CD4-positive, alpha-beta T cell (primary cell): ENCODE measurements at regions of chr7 and their contacts with region 1.

Region 1: GRCh38 chr7:32495298-32496176 is at the start of gene AVL9:
- DNase-seq: peak; percentile 97 to 100 (median 99)
- ATAC-seq: peak; percentile 93
- H3K4me3 ChIP-seq: peak within 1 kb of the TSS; percentile 86
- H3K4me3 Mint-ChIP-seq: peak within 1 kb of the TSS; percentile 92
- H3K27ac ChIP-seq: peak within 1 kb of the TSS; percentile 94 to 95
- H3K27ac Mint-ChIP-seq: peak within 1 kb of the TSS; percentile 94
- H3K4me1 ChIP-seq: peaks cover 22% of the 10 kb centered on the region
- H3K4me1 Mint-ChIP-seq: peaks cover 53% of the 10 kb centered on the region
- H3K27me3 ChIP-seq: no peaks in the 10 kb centered on the region
- H3K27me3 Mint-ChIP-seq: no peaks in the 10 kb centered on the region
- CTCF ChIP-seq: no peak
- total RNA-seq, gene AVL9: 23.3 to 25.4 TPM

Region 2: DNA sequence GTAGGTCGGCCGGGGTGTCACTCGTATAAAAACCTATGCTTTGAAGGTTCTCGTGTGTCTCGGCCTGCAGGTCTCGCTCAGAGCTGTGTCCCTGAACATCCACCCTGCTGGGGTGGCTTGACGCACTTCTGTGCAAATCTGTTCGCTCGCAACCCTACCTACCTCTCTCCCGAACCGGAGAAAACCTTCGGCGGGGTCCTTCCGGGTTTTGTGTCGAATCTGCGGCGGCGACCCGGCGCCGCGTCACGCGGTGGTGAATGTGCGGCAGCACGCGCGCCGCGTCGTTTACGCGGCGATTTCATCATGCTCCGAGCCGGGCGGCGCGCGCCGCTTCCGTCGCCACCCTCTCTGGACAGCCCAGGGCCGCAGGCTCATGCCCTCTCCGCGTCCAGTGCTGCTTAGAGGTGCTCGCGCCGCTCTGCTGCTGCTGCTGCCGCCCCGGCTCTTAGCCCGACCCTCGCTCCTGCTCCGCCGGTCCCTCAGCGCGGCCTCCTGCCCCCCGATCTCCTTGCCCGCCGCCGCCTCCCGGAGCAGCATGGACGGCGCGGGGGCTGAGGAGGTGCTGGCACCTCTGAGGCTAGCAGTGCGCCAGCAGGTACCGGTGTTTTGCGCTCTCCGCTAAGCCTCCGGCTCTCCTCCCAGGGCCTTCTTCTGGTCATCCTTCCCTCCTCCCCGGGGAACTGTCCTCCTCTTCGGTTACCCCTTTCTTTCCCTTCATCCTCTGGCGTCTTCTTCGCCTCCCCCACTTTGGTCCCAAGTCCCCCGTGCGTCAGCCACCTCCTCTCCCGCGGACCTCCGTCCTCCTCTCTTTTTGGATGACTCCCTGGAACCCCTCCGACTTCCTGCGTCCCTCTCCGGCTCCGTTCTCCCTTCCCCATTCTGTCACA is 1900.7 kb before region 1 on chr7 and contains the start of gene GARS1:
- CTCF ChIA-PET with region 1: no interaction called
- POLR2A ChIA-PET with region 1: no interaction called
- intact Hi-C with region 1: loop called in 1 of 2 experiments (anchors 10 kb)
- DNase-seq: peak; percentile 80 to 95 (median 87)
- ATAC-seq: peak; percentile 82
- H3K4me3 ChIP-seq: peak within 1 kb of the TSS; percentile 85
- H3K4me3 Mint-ChIP-seq: peak within 1 kb of the TSS; percentile 99
- H3K27ac ChIP-seq: peak within 1 kb of the TSS; percentile 88 to 90
- H3K27ac Mint-ChIP-seq: peak within 1 kb of the TSS; percentile 100
- H3K4me1 ChIP-seq: peaks cover 28% of the 10 kb centered on the region
- H3K4me1 Mint-ChIP-seq: peaks cover 85% of the 10 kb centered on the region
- H3K27me3 ChIP-seq: no peaks in the 10 kb centered on the region
- H3K27me3 Mint-ChIP-seq: no peaks in the 10 kb centered on the region
- CTCF ChIP-seq: no peak
- total RNA-seq, gene GARS1: 127 to 132 TPM

Region 3: DNA sequence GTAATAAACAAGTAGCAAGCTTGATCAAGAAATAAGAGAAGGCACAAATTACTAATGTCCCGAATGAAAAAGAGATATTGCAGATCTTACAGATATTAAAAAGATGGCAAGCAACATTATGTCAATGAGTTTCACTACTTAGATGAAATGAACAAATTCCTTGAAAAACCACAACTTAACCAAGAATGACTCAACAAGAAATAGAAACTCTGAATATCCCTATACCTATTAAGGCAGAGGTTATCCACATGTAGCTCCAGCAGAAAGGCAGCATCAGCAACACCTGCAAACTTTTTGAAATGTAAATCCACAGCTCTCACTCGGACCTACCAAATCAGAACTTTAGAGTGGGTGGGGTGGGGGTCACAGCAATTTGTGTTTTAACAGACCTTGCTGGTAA is 459.0 kb before region 1 on chr7:
- CTCF ChIA-PET with region 1: no interaction called
- POLR2A ChIA-PET with region 1: no interaction called
- intact Hi-C with region 1: no loop called
- DNase-seq: no peak
- ATAC-seq: no peak
- H3K4me3 ChIP-seq: no peak overlapping the region
- H3K4me3 Mint-ChIP-seq: no peak overlapping the region
- H3K27ac ChIP-seq: no peak overlapping the region
- H3K27ac Mint-ChIP-seq: no peak overlapping the region
- H3K4me1 ChIP-seq: no peaks in the 10 kb centered on the region
- H3K4me1 Mint-ChIP-seq: no peaks in the 10 kb centered on the region
- H3K27me3 ChIP-seq: no peaks in the 10 kb centered on the region
- H3K27me3 Mint-ChIP-seq: no peaks in the 10 kb centered on the region
- CTCF ChIP-seq: no peak

Region 4: GRCh38 chr7:32330602-32331001 is 164.9 kb before region 1 on chr7:
- CTCF ChIA-PET with region 1: no interaction called
- POLR2A ChIA-PET with region 1: no interaction called
- intact Hi-C with region 1: no loop called
- DNase-seq: no peak
- ATAC-seq: no peak
- H3K4me3 ChIP-seq: no peak overlapping the region
- H3K4me3 Mint-ChIP-seq: no peak overlapping the region
- H3K27ac ChIP-seq: no peak overlapping the region
- H3K27ac Mint-ChIP-seq: no peak overlapping the region
- H3K4me1 ChIP-seq: no peaks in the 10 kb centered on the region
- H3K4me1 Mint-ChIP-seq: no peaks in the 10 kb centered on the region
- H3K27me3 ChIP-seq: no peaks in the 10 kb centered on the region
- H3K27me3 Mint-ChIP-seq: no peaks in the 10 kb centered on the region
- CTCF ChIP-seq: no peak

Region 5: DNA sequence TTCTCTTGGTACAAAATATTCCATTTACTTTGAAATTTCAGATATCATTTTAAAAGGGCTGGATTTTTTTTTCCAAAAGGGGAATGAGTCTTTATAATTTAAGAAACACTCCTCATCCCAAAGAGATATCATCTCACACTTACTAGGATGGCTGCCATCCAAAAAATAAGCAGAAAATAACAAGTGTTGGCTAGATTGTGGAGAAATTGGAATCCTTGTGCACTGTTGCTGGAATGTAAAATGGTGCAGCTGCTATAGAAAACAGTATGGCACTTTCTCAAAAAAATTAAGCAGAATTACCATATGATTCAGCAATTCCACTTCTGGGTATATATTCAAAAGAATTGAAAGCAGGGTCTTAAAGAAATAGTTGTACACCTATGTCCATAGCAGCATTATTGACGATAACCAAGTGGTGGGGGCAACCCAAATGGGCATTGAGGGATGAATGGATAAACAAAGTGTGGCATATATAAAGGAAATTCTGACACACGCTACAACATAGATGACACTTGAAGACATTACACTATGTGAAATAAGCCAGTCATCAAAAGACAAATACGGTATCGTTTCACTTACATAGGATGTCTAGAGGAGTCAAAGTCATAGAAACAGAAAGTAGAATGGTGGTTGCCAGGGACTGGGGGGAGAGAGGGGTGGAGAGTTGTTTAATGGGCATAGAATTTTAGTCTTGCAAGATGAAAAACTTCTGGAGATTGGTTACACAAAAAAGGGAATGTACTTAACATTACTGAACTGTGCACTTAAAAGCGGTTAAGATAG is 59.2 kb before region 1 on chr7:
- CTCF ChIA-PET with region 1: no interaction called
- POLR2A ChIA-PET with region 1: no interaction called
- intact Hi-C with region 1: no loop called
- DNase-seq: no peak
- ATAC-seq: no peak
- H3K4me3 ChIP-seq: no peak overlapping the region
- H3K4me3 Mint-ChIP-seq: no peak overlapping the region
- H3K27ac ChIP-seq: no peak overlapping the region
- H3K27ac Mint-ChIP-seq: no peak overlapping the region
- H3K4me1 ChIP-seq: no peaks in the 10 kb centered on the region
- H3K4me1 Mint-ChIP-seq: no peaks in the 10 kb centered on the region
- H3K27me3 ChIP-seq: peaks cover 0 to 1% of the 10 kb centered on the region in 2 experiments
- H3K27me3 Mint-ChIP-seq: peaks cover 36% of the 10 kb centered on the region
- CTCF ChIP-seq: no peak

Region 6: GRCh38 chr7:32453341-32454011 is 42.1 kb before region 1 on chr7:
- CTCF ChIA-PET with region 1: no interaction called
- POLR2A ChIA-PET with region 1: no interaction called
- intact Hi-C with region 1: no loop called
- DNase-seq: no peak
- ATAC-seq: no peak
- H3K4me3 ChIP-seq: no peak overlapping the region
- H3K4me3 Mint-ChIP-seq: no peak overlapping the region
- H3K27ac ChIP-seq: no peak overlapping the region
- H3K27ac Mint-ChIP-seq: no peak overlapping the region
- H3K4me1 ChIP-seq: no peaks in the 10 kb centered on the region
- H3K4me1 Mint-ChIP-seq: no peaks in the 10 kb centered on the region
- H3K27me3 ChIP-seq: peaks cover 0 to 3% of the 10 kb centered on the region in 2 experiments
- H3K27me3 Mint-ChIP-seq: peaks cover 38% of the 10 kb centered on the region
- CTCF ChIP-seq: no peak

Region 7: DNA sequence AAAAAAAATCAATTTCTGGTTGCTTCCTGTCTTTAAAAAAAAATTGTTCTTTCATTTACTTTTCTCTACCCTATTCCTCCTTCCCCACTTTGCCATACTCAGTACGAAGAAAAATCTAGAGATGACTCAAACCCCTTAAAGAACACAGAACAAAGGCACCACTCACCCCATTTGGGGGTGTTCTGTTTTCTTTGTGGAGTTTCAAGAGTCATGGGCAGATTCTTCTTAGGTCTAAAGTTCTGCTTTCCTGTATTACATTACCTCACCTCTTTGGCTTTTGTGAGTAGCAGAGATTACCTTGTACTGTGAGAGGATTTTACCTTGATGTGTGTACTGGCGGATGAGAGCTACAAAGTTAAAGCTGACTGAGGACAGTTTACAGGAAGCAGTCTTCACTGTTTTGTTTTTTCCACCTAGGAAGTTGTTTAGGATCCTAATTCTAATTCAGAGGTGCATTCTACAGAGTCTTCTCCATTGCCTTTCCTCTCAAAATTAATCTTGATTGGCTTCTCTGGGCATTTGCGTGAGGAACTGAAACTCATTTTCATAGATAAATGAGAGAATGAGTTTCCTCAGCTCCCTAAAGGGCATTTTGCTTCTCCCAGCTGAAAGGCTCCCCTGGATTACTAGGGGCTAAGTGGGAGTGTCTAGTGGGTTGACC is 20.5 kb after region 1 on chr7:
- CTCF ChIA-PET with region 1: no interaction called
- POLR2A ChIA-PET with region 1: interaction called, 11 read pairs
- intact Hi-C with region 1: no loop called
- DNase-seq: peak in 2 of 14 experiments; percentile 13 to 17
- ATAC-seq: peak; percentile 66
- H3K4me3 ChIP-seq: no peak overlapping the region
- H3K4me3 Mint-ChIP-seq: peak overlapping the region; percentile 36
- H3K27ac ChIP-seq: peak overlapping the region in 1 of 2 donors; percentile 17
- H3K27ac Mint-ChIP-seq: peak overlapping the region; percentile 88
- H3K4me1 ChIP-seq: peaks cover 22% of the 10 kb centered on the region
- H3K4me1 Mint-ChIP-seq: peaks cover 69% of the 10 kb centered on the region
- H3K27me3 ChIP-seq: no peaks in the 10 kb centered on the region
- H3K27me3 Mint-ChIP-seq: no peaks in the 10 kb centered on the region
- CTCF ChIP-seq: no peak

Region 8: GRCh38 chr7:32846701-32847100 is 351.2 kb after region 1 on chr7:
- CTCF ChIA-PET with region 1: no interaction called
- POLR2A ChIA-PET with region 1: no interaction called
- intact Hi-C with region 1: loop called in 1 of 2 experiments (anchors 5 kb)
- DNase-seq: peak; percentile 84 to 97 (median 91)
- ATAC-seq: peak; percentile 100
- H3K4me3 ChIP-seq: no peak overlapping the region
- H3K4me3 Mint-ChIP-seq: no peak overlapping the region
- H3K27ac ChIP-seq: no peak overlapping the region
- H3K27ac Mint-ChIP-seq: no peak overlapping the region
- H3K4me1 ChIP-seq: peaks cover 5% of the 10 kb centered on the region
- H3K4me1 Mint-ChIP-seq: peaks cover 6% of the 10 kb centered on the region
- H3K27me3 ChIP-seq: peaks cover 3 to 4% of the 10 kb centered on the region in 2 experiments
- H3K27me3 Mint-ChIP-seq: peaks cover 28% of the 10 kb centered on the region
- CTCF ChIP-seq: peak; percentile 90

Region 9: GRCh38 chr7:33128990-33129805 is 633.7 kb after region 1 on chr7 and contains the start of gene BBS9:
- CTCF ChIA-PET with region 1: interaction called, 4 read pairs
- POLR2A ChIA-PET with region 1: no interaction called
- intact Hi-C with region 1: loop called (anchors 2 to 5 kb)
- DNase-seq: peak; percentile 79 to 95 (median 87)
- ATAC-seq: peak; percentile 95
- H3K4me3 ChIP-seq: peak within 1 kb of the TSS; percentile 63
- H3K4me3 Mint-ChIP-seq: peak within 1 kb of the TSS; percentile 96
- H3K27ac ChIP-seq: peak within 1 kb of the TSS; percentile 54 to 79
- H3K27ac Mint-ChIP-seq: peak within 1 kb of the TSS; percentile 92
- H3K4me1 ChIP-seq: peaks cover 4% of the 10 kb centered on the region
- H3K4me1 Mint-ChIP-seq: peaks cover 34% of the 10 kb centered on the region
- H3K27me3 ChIP-seq: no peaks in the 10 kb centered on the region
- H3K27me3 Mint-ChIP-seq: peaks cover 4% of the 10 kb centered on the region
- CTCF ChIP-seq: no peak
- total RNA-seq, gene BBS9: 16.0 to 20.4 TPM